Heart right ventricle (tissue), 16 donors: ENCODE measurements at regions of chr2 and their contacts with region 1.

Region 1: DNA sequence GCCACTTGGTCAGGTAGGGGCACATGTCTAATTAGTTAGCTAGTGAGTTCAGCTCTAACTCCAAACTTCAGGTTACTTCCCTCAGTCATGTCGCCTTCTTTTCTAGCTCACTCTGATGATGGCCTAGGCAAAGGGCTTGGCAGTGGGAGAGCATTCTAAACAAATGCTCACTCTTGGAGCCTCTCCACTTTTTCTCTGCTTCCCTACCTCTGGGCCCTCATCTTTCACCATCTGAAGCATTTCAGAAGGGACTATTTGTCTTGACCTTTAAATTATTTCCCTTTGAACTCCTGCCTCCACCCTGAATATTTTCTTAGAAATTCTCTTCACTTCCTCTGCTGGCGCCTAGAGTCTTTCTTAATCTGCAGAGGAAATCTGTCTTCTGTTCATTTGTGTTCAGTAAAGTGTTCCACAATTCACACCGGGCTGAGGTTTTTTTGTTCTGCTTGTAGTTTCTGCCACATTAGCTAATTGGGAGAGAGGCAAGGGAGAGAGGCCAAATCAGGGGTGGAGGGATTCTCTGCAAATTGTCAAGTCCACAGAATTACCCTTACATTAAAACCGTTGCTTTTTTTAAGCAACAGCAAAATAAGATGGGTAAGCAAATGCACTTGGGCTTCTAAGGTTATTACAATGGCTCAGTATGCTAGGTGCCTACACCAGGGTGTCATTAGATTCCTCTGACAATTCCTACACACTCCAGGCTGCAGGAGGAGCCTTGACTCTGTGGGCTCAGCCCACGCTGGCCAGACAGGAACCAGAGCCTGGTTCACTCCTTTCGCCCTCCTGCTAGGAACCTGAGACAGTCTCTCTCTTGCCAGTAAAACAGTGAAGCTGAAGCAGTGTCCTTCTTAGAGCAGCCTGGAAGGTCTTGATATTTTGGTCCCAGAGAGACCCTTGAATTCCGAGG is 5.5 kb downstream of the MSGN1 start:
- DNase-seq: no peak
- ATAC-seq: peak; percentile 48 to 84 (median 72)
- H3K4me3 ChIP-seq: no peak overlapping the region
- H3K27ac ChIP-seq: peak overlapping the region; percentile 52 to 87 (median 81)
- H3K4me1 ChIP-seq: peaks cover 10 to 41% (median 33%) of the 10 kb centered on the region in 9 donors
- H3K27me3 ChIP-seq: no peaks in the 10 kb centered on the region
- CTCF ChIP-seq: no peak

Region 2: DNA sequence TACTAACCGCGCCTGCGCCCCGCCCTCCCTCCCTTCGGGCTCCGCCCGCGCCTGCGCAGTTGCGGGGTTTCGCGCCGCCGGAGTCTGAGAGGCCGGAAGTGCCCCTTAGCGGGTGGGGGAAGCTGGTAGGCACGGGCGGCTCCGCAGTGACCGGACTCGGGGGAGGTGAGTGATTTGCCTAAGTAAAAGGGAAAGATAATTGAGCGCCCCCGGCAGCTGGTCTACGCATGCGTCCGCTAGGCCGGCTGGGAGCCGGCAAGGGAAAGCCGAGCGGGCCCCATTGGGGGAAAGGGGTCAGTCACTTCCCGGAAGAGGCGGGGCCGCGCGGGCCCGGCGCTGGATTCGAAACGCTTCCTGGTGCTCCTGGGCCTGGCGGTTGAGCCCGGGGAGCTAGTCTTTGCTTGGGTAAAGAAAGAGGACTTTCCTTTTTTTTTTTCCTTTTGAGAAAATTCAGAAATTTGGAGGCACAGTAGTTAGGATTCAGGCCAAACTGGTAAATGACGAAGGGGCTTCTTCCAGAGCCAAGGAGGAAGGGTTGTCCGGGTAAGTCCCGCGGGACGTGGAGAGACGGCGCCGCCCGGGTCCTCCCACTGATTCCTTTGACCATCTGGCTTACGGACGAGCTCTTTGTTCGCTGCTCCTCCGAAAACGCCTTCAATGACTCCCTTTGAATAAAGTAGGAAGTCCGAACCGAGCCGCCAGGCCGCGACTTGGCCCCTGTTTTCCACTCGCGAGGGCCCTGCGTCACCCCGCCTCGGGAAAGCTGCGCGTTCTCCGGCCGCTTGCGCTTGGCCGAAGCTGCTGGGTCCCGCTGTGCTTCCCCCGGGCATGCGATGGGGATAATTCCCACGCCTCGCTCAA is 67.8 kb before region 1 on chr2 and contains the starts of genes GEN1 and SMC6:
- intact Hi-C with region 1: loop called in 4 of 10 experiments (anchors 5 to 10 kb)
- DNase-seq: peak; percentile 89 to 93
- ATAC-seq: peak; percentile 96 to 99 (median 98)
- H3K4me3 ChIP-seq: peak within 1 kb of the TSS; percentile 81 to 98 (median 92)
- H3K27ac ChIP-seq: peak within 1 kb of the TSS; percentile 93 to 99 (median 98)
- H3K4me1 ChIP-seq: peaks cover 0 to 51% (median 29%) of the 10 kb centered on the region in 9 donors
- H3K27me3 ChIP-seq: no peaks in the 10 kb centered on the region
- CTCF ChIP-seq: no peak
- total RNA-seq, gene GEN1: 2.8 to 5.4 (median 3.8) TPM
- total RNA-seq, gene SMC6: 9.4 to 14.7 (median 12.3) TPM

Region 3: DNA sequence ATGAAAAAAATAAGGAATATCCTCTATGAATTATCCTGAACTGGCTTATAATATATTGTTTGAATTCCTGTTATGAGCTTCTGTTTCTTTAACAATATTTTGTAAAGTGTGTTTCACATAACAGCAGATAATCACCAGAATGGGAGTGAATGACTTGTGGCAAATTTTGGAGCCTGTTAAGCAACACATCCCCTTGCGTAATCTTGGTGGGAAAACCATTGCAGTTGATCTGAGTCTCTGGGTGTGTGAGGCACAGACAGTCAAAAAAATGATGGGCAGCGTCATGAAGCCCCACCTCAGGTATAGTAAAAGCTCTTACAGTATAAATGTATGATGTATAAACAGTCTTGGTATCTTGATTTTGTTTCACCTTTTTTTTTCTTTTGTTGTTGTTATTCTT is 62.0 kb before region 1 on chr2:
- intact Hi-C with region 1: loop called in 3 of 10 experiments (anchors 10 kb)
- DNase-seq: no peak
- ATAC-seq: no peak
- H3K4me3 ChIP-seq: no peak overlapping the region
- H3K27ac ChIP-seq: no peak overlapping the region
- H3K4me1 ChIP-seq: peaks cover 0 to 22% (median 7%) of the 10 kb centered on the region in 9 donors
- H3K27me3 ChIP-seq: no peaks in the 10 kb centered on the region
- CTCF ChIP-seq: no peak

Region 4: DNA sequence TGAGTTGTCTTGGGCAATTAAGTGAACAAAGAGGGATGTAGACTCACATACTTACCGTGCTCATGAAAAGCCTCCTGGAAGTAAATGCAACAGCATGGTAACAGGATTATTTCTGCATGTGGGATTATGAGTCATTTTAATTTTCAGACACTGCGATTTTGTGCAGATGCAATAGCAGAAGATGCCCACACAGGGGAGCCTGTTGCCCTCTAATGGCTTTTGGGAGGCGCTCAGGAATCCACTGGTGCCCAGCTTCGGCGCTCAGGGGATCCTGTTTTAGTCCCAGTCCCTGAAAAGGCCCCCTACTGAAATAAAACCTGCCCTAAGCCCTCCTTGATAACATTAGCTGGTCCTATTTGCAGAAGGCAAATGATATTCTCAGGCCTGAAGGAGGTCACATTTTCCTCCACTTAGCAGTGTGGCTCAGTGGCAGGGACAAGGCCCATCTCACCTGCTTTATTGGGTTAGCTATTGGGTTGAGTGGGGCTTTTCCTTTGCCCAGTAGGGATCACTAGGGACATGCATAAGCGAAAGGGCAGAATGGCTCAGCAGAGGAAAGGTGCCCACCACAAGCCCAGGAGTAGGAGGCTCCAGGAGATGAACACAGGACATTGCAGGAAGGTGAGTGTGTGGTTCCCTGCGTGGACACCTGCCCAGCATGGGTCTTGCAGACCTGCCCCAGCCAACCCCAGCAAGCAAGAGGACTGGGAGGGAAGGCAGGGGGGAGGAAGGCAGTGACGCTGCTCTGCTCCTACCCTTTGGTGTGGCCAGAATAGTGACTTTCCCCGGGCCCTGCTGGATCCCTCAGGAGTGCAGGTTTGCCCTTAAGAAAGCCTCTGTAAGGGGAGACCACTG is 30.2 kb after region 1 on chr2:
- intact Hi-C with region 1: no loop called
- DNase-seq: peak; percentile 31 to 52
- ATAC-seq: peak; percentile 34 to 80 (median 60)
- H3K4me3 ChIP-seq: no peak overlapping the region
- H3K27ac ChIP-seq: no peak overlapping the region
- H3K4me1 ChIP-seq: no peaks in the 10 kb centered on the region
- H3K27me3 ChIP-seq: peaks cover 0 to 4% (median 0%) of the 10 kb centered on the region in 7 donors
- CTCF ChIP-seq: peak; percentile 73 to 93 (median 85)

Region 5: DNA sequence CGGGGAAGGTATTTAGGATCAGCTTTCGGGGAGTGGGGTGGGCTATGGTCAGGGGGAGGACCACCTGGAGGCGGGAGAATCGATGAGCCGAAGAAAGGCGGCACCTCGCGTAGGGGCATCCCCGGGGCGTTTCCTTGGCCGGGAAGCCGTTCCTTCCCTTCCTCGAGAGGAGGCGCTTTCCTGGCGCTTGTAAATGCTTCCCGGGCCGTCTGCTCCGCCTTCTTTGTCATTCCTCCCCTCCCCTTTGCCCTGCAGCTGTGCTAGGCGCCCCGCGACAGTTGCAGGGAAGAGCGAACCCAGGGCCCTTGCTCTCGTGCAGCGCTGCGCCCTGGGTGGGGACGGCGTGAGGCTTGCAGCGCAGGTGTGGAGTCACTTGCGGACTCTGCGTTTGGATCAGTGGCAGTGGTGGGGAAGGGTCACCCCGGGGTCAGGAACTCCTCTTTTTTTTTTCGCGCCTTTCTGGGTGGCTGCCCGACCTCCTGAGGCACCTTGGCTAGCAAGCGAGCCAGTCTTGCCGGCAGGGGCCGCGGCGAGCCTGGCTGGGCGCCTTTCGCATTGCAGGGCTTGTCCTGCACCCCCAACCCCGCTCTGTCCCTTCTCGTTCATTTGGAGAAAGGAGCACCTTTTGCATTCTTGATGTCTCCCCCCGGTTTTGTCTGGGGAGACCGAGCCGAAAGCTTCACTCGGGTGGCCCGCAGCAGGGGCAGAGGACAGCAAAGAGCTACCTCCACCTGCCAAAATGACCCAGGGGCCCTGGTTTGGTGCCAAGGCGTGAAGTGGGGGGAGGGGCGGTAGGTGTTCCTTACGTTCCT is 57.5 kb after region 1 on chr2:
- intact Hi-C with region 1: no loop called
- DNase-seq: peak; percentile 65 to 72
- ATAC-seq: peak; percentile 72 to 92 (median 78)
- H3K4me3 ChIP-seq: peak overlapping the region; percentile 62 to 85 (median 68)
- H3K27ac ChIP-seq: peak overlapping the region; percentile 18 to 66 (median 46)
- H3K4me1 ChIP-seq: peaks cover 4 to 23% (median 19%) of the 10 kb centered on the region in 9 donors
- H3K27me3 ChIP-seq: peaks cover 0 to 68% (median 35%) of the 10 kb centered on the region in 7 donors
- CTCF ChIP-seq: peak in 7 of 9 donors; percentile 13 to 48 (median 18)